ENCODE measurements at regions of chr15 and their contacts with region 1.

Region 1: GRCh38 chr15:35751413-35752133 is 205.6 kb upstream of the DPH6 start:
- DNase-seq: peak; percentile 64
- H3K4me3 ChIP-seq: no peak overlapping the region
- H3K27ac ChIP-seq: no peak overlapping the region
- H3K4me1 ChIP-seq: no peaks in the 10 kb centered on the region
- H3K27me3 ChIP-seq: no peaks in the 10 kb centered on the region
- CTCF ChIP-seq: peak; percentile 54 to 74 (median 60)
- POLR2A ChIP-seq: no peak

Region 2: GRCh38 chr15:35545824-35546510 is 205.6 kb before region 1 on chr15 and contains the start of gene DPH6:
- intact Hi-C with region 1: loop called (anchors 10 kb)
- DNase-seq: peak; percentile 63
- H3K4me3 ChIP-seq: peak within 1 kb of the TSS; percentile 76 to 78
- H3K27ac ChIP-seq: peak within 1 kb of the TSS; percentile 95 to 96
- H3K4me1 ChIP-seq: peaks cover 8% of the 10 kb centered on the region
- H3K27me3 ChIP-seq: no peaks in the 10 kb centered on the region
- CTCF ChIP-seq: peak in 2 of 4 experiments; percentile 5 to 22
- POLR2A ChIP-seq: peak; percentile 50
- total RNA-seq, gene DPH6: 8.9 to 17.6 TPM

Region 3: DNA sequence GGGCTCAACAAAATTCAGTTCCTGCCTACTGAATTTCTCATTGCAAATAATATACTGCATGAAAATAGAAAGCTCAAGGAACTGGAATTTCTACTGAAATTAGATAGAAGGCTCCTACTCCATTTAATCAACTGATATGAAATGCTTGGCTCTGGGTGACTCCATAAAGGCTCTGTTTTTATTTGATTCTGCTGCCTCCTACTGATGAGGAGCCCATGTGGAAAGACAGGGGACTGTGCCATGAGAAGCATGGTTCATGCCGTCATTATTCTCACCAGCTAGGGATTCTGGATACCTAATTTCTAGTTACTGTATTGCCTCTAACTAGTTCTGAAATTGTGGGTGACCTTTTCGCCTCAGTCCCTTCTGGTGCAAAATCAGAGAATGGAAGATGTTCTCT is 160.6 kb after region 1 on chr15:
- intact Hi-C with region 1: no loop called
- DNase-seq: no peak
- H3K4me3 ChIP-seq: no peak overlapping the region
- H3K27ac ChIP-seq: no peak overlapping the region
- H3K4me1 ChIP-seq: no peaks in the 10 kb centered on the region
- H3K27me3 ChIP-seq: no peaks in the 10 kb centered on the region
- CTCF ChIP-seq: no peak
- POLR2A ChIP-seq: no peak

Region 4: GRCh38 chr15:36591536-36592411 is 840.2 kb after region 1 on chr15:
- intact Hi-C with region 1: loop called (anchors 10 kb)
- DNase-seq: no peak
- H3K4me3 ChIP-seq: no peak overlapping the region
- H3K27ac ChIP-seq: no peak overlapping the region
- H3K4me1 ChIP-seq: no peaks in the 10 kb centered on the region
- H3K27me3 ChIP-seq: no peaks in the 10 kb centered on the region
- CTCF ChIP-seq: no peak
- POLR2A ChIP-seq: no peak

Region 5: GRCh38 chr15:36877796-36878683 is 1126.5 kb after region 1 on chr15:
- intact Hi-C with region 1: loop called (anchors 10 kb)
- DNase-seq: no peak
- H3K4me3 ChIP-seq: no peak overlapping the region
- H3K27ac ChIP-seq: no peak overlapping the region
- H3K4me1 ChIP-seq: peaks cover 3% of the 10 kb centered on the region
- H3K27me3 ChIP-seq: no peaks in the 10 kb centered on the region
- CTCF ChIP-seq: no peak
- POLR2A ChIP-seq: no peak

Region 6: DNA sequence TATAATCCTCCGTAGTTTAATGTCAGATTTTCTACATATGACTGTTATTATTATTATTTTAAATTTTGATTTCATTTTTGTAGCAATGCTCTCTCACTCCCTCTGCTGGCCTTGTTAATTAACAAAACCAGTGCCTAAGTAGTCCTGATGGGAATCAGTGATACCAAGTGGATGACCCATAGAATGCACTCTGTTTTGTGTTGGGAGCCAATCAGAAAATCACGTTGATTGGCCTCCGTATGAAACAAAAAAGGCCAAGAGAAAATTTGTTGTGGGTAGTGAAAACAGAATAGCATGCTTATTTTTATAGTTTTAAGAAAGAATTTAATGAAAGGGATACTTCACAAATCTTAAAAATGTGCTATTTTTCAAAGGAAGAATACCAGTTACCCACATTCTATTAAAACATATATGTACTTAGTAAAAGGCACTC is 1383.1 kb after region 1 on chr15:
- intact Hi-C with region 1: loop called (anchors 10 kb)
- DNase-seq: no peak
- H3K4me3 ChIP-seq: no peak overlapping the region
- H3K27ac ChIP-seq: no peak overlapping the region
- H3K4me1 ChIP-seq: no peaks in the 10 kb centered on the region
- H3K27me3 ChIP-seq: no peaks in the 10 kb centered on the region
- CTCF ChIP-seq: peak; percentile 32 to 76 (median 66)
- POLR2A ChIP-seq: no peak